ENCODE measurements at regions of chr17 and their contacts with region 1.

Region 1: DNA sequence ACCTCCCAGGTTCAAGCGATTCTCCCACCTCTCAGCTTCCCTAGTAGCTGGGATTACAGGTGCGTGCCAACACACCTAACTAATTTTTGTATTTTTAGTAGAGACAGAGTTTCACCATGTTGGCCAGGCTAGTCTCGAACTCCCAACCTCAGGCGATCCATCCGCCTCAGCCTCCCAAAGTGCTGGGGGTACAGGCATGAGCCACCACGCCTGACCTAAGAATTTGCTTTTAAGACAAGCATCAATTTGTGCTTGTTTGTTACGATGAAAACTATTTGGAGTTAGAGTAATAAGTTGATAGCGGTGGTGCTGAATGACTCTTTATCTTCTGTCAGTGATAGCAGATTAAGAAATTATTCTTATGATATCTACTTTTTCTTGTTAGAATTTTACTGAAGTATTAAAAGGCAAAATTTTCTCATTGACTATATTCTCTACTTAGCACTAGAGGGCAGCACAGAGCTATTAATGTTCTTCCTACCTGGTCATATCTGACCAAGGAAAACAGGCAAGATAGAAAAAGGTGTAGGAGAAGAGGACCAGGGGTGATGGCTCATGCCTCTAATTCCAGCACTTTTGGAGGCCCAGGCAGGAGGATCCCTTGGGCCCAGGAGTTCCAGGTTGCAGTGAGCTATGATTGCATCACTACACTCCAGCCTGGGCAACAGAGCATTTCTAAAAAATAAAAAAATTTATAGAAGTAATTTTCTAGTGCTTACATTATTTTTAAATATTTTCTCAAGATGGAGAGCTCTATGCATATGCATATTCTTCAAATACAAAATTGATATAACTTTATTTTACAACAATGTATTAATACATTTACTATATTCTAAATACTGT is 24.5 kb downstream of the STXBP4 start:
- DNase-seq: no peak
- ATAC-seq: peak in 1 of 4 donors; percentile 45
- H3K4me3 ChIP-seq: no peak overlapping the region
- H3K27ac ChIP-seq: no peak overlapping the region
- H3K4me1 ChIP-seq: no peaks in the 10 kb centered on the region
- H3K27me3 ChIP-seq: no peaks in the 10 kb centered on the region
- CTCF ChIP-seq: peak; percentile 55 to 80 (median 69)
- POLR2A ChIP-seq: no peak

Region 2: GRCh38 chr17:55264645-55265298 is 271.8 kb after region 1 on chr17 and contains the start of gene HLF:
- intact Hi-C with region 1: loop called in 1 of 10 experiments (anchors 10 kb)
- DNase-seq: peak; percentile 81 to 90 (median 87)
- ATAC-seq: peak; percentile 86 to 98 (median 93)
- H3K4me3 ChIP-seq: peak within 1 kb of the TSS; percentile 50 to 89 (median 68)
- H3K27ac ChIP-seq: peak within 1 kb of the TSS; percentile 36 to 94 (median 82)
- H3K4me1 ChIP-seq: peaks cover 0 to 52% (median 34%) of the 10 kb centered on the region in 12 donors
- H3K27me3 ChIP-seq: peaks cover 0 to 60% (median 0%) of the 10 kb centered on the region in 9 donors
- CTCF ChIP-seq: no peak
- POLR2A ChIP-seq: peak in 1 of 2 donors; percentile 55
- total RNA-seq, gene HLF: 7.5 to 46.3 (median 28.7) TPM

Region 3: GRCh38 chr17:55295411-55296170 is 302.6 kb after region 1 on chr17:
- intact Hi-C with region 1: loop called in 8 of 10 experiments (anchors 2 to 10 kb)
- DNase-seq: peak in 3 of 5 donors; percentile 48 to 49 (median 48)
- ATAC-seq: peak; percentile 78 to 86 (median 86)
- H3K4me3 ChIP-seq: no peak overlapping the region
- H3K27ac ChIP-seq: peak overlapping the region in 10 of 12 donors; percentile 9 to 62 (median 36)
- H3K4me1 ChIP-seq: peaks cover 0 to 24% (median 9%) of the 10 kb centered on the region in 12 donors
- H3K27me3 ChIP-seq: no peaks in the 10 kb centered on the region
- CTCF ChIP-seq: peak; percentile 71 to 92 (median 86)
- POLR2A ChIP-seq: no peak

Region 4: GRCh38 chr17:55303701-55304145 is 310.7 kb after region 1 on chr17:
- intact Hi-C with region 1: loop called in 8 of 10 experiments (anchors 2 to 10 kb)
- DNase-seq: no peak
- ATAC-seq: no peak
- H3K4me3 ChIP-seq: no peak overlapping the region
- H3K27ac ChIP-seq: no peak overlapping the region
- H3K4me1 ChIP-seq: peaks cover 0 to 21% (median 15%) of the 10 kb centered on the region in 12 donors
- H3K27me3 ChIP-seq: no peaks in the 10 kb centered on the region
- CTCF ChIP-seq: no peak
- POLR2A ChIP-seq: no peak

Region 5: GRCh38 chr17:55348749-55349354 is 355.8 kb after region 1 on chr17:
- intact Hi-C with region 1: loop called in 9 of 10 experiments (anchors 1 to 5 kb)
- DNase-seq: peak in 4 of 5 donors; percentile 16 to 37 (median 34)
- ATAC-seq: peak in 3 of 4 donors; percentile 69 to 78 (median 76)
- H3K4me3 ChIP-seq: no peak overlapping the region
- H3K27ac ChIP-seq: no peak overlapping the region
- H3K4me1 ChIP-seq: peaks cover 0 to 9% (median 0%) of the 10 kb centered on the region in 12 donors
- H3K27me3 ChIP-seq: no peaks in the 10 kb centered on the region
- CTCF ChIP-seq: peak; percentile 77 to 95 (median 85)
- POLR2A ChIP-seq: no peak

Region 6: GRCh38 chr17:55356434-55357328 is 363.7 kb after region 1 on chr17:
- intact Hi-C with region 1: loop called in 3 of 10 experiments (anchors 5 kb)
- DNase-seq: peak in 4 of 5 donors; percentile 39 to 70 (median 53)
- ATAC-seq: peak in 3 of 4 donors; percentile 68 to 85 (median 75)
- H3K4me3 ChIP-seq: no peak overlapping the region
- H3K27ac ChIP-seq: no peak overlapping the region
- H3K4me1 ChIP-seq: no peaks in the 10 kb centered on the region
- H3K27me3 ChIP-seq: no peaks in the 10 kb centered on the region
- CTCF ChIP-seq: peak; percentile 67 to 84 (median 76)
- POLR2A ChIP-seq: no peak

Region 7: GRCh38 chr17:55513885-55514591 is 521.0 kb after region 1 on chr17:
- intact Hi-C with region 1: loop called in 6 of 10 experiments (anchors 5 to 10 kb)
- DNase-seq: peak in 4 of 5 donors; percentile 42 to 63 (median 58)
- ATAC-seq: peak in 3 of 4 donors; percentile 53 to 63 (median 58)
- H3K4me3 ChIP-seq: no peak overlapping the region
- H3K27ac ChIP-seq: no peak overlapping the region
- H3K4me1 ChIP-seq: peaks cover 0 to 8% (median 0%) of the 10 kb centered on the region in 12 donors
- H3K27me3 ChIP-seq: peaks cover 0 to 6% (median 0%) of the 10 kb centered on the region in 9 donors
- CTCF ChIP-seq: peak; percentile 86 to 98 (median 92)
- POLR2A ChIP-seq: no peak